Activated CD4-positive, alpha-beta T cell treated with anti-CD3 and anti-CD28 coated beads for 36 hours (primary cell): ENCODE measurements at regions of chr17 and their contacts with region 1.

Region 1: DNA sequence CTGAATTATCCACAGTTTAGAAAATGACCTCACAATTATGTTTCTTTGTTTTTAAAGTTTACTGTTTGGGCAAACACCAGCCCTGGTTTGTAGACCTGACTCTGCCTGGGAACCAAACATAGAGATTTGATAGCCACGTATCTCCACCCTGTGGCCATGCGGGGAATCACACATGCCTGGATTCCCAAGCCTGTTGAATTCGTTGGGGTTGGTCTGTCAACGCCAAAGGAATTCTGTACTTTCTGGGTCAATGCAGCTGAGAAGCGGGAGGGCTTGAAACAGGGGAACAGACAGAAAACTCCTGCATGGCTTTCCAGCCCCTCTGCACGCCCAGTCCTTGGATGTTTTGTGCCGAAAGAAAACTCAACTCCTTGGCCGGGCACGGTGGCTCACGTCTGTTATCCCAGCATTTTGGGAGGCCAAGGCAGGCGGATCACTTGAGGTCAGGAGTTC is 27.0 kb downstream of the CD300A start:
- DNase-seq: peak; percentile 80
- ATAC-seq: peak; percentile 78
- H3K4me3 Mint-ChIP-seq: no peak overlapping the region
- H3K27ac Mint-ChIP-seq: no peak overlapping the region
- H3K4me1 Mint-ChIP-seq: no peaks in the 10 kb centered on the region
- H3K27me3 Mint-ChIP-seq: no peaks in the 10 kb centered on the region

Region 2: GRCh38 chr17:74379495-74380085 is 113.8 kb before region 1 on chr17:
- CTCF ChIA-PET with region 1: interaction called, 17 read pairs
- POLR2A ChIA-PET with region 1: no interaction called
- intact Hi-C with region 1: loop called (anchors 1 kb)
- DNase-seq: peak; percentile 97
- ATAC-seq: peak; percentile 97
- H3K4me3 Mint-ChIP-seq: no peak overlapping the region
- H3K27ac Mint-ChIP-seq: no peak overlapping the region
- H3K4me1 Mint-ChIP-seq: no peaks in the 10 kb centered on the region
- H3K27me3 Mint-ChIP-seq: no peaks in the 10 kb centered on the region

Region 3: GRCh38 chr17:74437702-74438101 is 55.7 kb before region 1 on chr17:
- CTCF ChIA-PET with region 1: interaction called, 3 read pairs
- POLR2A ChIA-PET with region 1: no interaction called
- intact Hi-C with region 1: loop called in 1 of 2 experiments (anchors 1 kb)
- DNase-seq: no peak
- ATAC-seq: no peak
- H3K4me3 Mint-ChIP-seq: no peak overlapping the region
- H3K27ac Mint-ChIP-seq: no peak overlapping the region
- H3K4me1 Mint-ChIP-seq: no peaks in the 10 kb centered on the region
- H3K27me3 Mint-ChIP-seq: peaks cover 18% of the 10 kb centered on the region